ENCODE measurements at regions of chr17 and their contacts with region 1.

Region 1: DNA sequence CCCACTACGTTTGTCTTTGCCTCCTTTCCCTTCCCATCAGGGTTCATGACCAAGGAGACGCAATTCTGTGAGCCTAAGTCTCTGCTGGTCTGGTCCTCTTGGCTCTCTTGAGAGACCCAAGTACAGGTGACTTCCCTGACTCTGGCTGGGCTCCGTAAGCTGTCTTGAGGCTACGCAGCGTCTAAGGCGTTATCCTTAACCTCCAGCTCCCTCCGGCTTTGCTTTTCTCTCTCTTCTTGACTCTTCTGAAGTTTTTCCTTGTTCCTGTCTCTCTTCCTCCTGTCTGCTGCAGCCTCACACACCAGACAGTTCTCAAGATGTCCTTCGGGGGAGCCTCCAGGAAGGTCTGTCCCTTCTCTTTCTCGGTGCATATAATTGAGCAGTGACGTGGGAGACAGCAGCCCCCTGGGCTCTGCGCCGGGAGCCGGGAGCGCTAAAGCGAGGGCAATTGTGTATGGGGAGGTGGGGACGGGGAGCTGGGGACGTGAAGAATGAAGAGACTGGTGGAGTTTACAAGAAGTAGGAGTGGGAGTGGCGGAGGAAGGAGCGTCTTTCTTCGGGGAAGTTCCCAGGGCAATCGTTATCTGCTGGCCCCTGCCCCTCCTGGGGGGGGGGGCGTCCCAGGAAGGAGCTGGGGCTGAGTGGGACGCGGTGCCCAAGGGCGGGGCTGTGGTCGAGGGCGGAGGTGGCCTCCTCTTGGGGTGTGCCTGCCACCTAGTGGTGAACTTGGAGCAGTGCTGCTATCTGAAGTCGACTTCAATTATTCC is 6.9 kb upstream of the PIRT start:
- DNase-seq: peak; percentile 67 to 74
- ATAC-seq: peak; percentile 87 to 93 (median 92)
- H3K4me3 ChIP-seq: peak overlapping the region in 9 of 10 donors; percentile 25 to 57 (median 51)
- H3K27ac ChIP-seq: no peak overlapping the region
- H3K4me1 ChIP-seq: peaks cover 0 to 14% (median 9%) of the 10 kb centered on the region in 9 donors
- H3K27me3 ChIP-seq: peaks cover 0 to 30% (median 7%) of the 10 kb centered on the region in 7 donors
- CTCF ChIP-seq: peak; percentile 88 to 96 (median 94)

Region 2: DNA sequence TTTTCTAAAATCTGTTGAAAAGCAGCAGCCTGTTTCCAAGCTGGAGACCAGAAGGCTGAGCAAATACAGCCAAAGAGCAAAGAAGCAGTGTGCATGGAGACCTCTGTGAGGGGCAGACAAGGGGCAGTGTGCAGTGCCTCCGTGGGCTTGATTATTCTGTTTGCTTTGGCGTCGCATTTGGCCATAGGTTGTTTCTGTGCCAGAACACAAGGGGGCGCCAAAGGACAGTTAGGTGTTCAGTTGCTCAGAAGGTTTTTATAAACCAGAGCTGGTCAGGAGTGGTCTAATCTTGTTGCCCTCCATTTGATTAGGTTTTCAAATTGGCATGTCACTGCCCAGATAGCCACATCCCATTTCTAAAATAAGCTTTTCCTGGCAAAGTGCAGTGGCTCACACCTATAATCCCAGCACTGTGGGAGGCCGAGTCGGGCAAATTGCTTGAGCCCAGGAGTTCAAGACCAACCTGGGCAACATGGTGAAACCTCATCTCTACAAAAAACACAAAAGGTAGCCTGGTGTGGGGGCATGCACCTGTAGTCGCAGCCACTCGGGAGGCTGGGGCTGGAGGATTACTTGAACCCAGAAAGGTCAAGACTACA is 198.3 kb before region 1 on chr17:
- intact Hi-C with region 1: loop called in 9 of 10 experiments (anchors 1 to 5 kb)
- DNase-seq: peak; percentile 55 to 69
- ATAC-seq: peak; percentile 41 to 75 (median 65)
- H3K4me3 ChIP-seq: no peak overlapping the region
- H3K27ac ChIP-seq: no peak overlapping the region
- H3K4me1 ChIP-seq: peaks cover 0 to 4% (median 0%) of the 10 kb centered on the region in 9 donors
- H3K27me3 ChIP-seq: no peaks in the 10 kb centered on the region
- CTCF ChIP-seq: peak; percentile 71 to 87 (median 84)

Region 3: DNA sequence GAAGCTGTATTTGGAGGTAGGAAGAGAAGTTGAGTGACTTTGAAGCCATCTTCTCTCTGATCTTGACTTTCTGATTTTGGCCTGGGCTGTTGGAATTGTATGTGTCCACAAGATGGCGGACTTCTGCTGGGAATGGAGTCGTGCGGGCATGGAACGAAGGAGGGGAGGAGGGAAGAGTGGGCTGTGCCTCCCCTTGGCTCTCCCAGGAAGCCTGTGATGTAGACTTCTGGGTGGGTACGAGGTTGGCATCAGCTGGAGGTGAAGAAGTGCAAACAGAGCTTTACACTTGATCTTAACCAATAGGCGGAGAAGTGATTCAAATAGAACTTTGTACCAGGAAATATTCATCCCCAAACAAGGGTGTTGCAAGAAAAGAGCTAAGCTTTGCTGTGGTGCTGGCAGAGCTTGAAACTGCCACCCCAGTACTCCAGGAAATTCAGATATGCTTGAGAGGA is 107.6 kb before region 1 on chr17:
- intact Hi-C with region 1: loop called (anchors 1 to 5 kb)
- DNase-seq: peak; percentile 33 to 54
- ATAC-seq: peak; percentile 52 to 84 (median 74)
- H3K4me3 ChIP-seq: no peak overlapping the region
- H3K27ac ChIP-seq: no peak overlapping the region
- H3K4me1 ChIP-seq: peaks cover 0 to 7% (median 0%) of the 10 kb centered on the region in 9 donors
- H3K27me3 ChIP-seq: no peaks in the 10 kb centered on the region
- CTCF ChIP-seq: peak; percentile 57 to 82 (median 72)

Region 4: GRCh38 chr17:10754109-10754508 is 90.7 kb before region 1 on chr17:
- intact Hi-C with region 1: loop called in 1 of 10 experiments (anchors 5 kb)
- DNase-seq: peak in 1 of 2 donors; percentile 32
- ATAC-seq: no peak
- H3K4me3 ChIP-seq: no peak overlapping the region
- H3K27ac ChIP-seq: no peak overlapping the region
- H3K4me1 ChIP-seq: peaks cover 0 to 5% (median 0%) of the 10 kb centered on the region in 9 donors
- H3K27me3 ChIP-seq: peaks cover 0 to 17% (median 0%) of the 10 kb centered on the region in 7 donors
- CTCF ChIP-seq: peak in 6 of 9 donors; percentile 18 to 41 (median 28)

Region 5: GRCh38 chr17:10899281-10899680 is 54.5 kb after region 1 on chr17:
- intact Hi-C with region 1: no loop called
- DNase-seq: no peak
- ATAC-seq: no peak
- H3K4me3 ChIP-seq: no peak overlapping the region
- H3K27ac ChIP-seq: no peak overlapping the region
- H3K4me1 ChIP-seq: no peaks in the 10 kb centered on the region
- H3K27me3 ChIP-seq: peaks cover 0 to 7% (median 0%) of the 10 kb centered on the region in 7 donors
- CTCF ChIP-seq: no peak